ENCODE measurements at regions of chr1 and their contacts with region 1.

Region 1: DNA sequence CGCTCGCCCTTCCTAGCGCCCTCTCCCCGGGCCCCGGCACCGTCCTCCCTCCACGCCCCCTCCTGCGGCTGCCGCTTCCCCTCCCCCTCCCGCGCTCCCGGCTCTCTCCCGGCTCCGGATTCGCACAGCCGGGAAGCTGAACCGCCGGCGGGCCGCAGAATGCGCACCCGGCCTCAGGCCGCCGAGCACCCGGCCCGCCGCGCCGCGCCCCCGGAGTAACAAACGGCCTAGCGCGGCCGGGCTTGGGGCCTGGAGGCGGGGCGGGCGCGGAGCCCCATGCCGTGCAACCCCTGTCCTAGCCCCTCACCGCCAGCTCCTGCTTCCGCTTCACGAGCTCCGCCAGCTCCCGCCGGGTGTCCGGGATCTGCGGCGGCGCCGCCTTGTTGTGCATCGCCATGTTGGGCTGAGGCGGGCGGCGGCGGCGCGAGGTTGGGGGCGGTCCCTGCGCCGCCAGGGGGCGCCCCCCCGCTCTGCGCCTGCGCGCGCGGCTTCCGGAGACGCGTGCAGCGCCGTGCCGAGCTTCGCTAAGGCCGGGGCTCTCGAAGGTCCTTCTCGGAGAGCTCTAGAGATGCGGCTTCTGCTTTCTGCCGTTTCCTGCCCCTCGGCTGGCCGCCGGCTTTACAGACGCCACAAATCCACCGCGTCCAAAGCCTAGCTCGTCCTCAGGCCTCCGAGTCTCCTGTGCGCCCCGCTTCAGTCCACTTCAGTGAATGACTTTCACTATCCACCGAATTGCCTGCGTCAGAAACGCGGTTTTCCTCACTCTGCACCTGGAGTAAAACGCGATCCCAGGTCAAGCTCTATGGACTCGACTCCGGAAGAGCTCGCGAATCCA is at the start of gene MEAF6:
- DNase-seq: peak; percentile 93
- ATAC-seq: peak; percentile 97
- H3K4me3 ChIP-seq: peak within 1 kb of the TSS; percentile 57 to 80 (median 77)
- H3K4me3 Mint-ChIP-seq: peak within 1 kb of the TSS; percentile 99
- H3K27ac ChIP-seq: peak within 1 kb of the TSS; percentile 78 to 87
- H3K27ac Mint-ChIP-seq: peak within 1 kb of the TSS; percentile 99
- H3K4me1 ChIP-seq: peaks cover 14 to 22% of the 10 kb centered on the region in 2 donors
- H3K4me1 Mint-ChIP-seq: peaks cover 39% of the 10 kb centered on the region
- H3K27me3 ChIP-seq: no peaks in the 10 kb centered on the region
- H3K27me3 Mint-ChIP-seq: no peaks in the 10 kb centered on the region
- CTCF ChIP-seq: peak; percentile 84
- total RNA-seq, gene MEAF6: 82.0 and 84.2 TPM in 2 replicates

Region 2: GRCh38 chr1:37474046-37474759 is 40.4 kb before region 1 on chr1 and contains the start of gene ZC3H12A:
- CTCF ChIA-PET with region 1: interaction called, 27 read pairs
- POLR2A ChIA-PET with region 1: interaction called, 9 read pairs
- intact Hi-C with region 1: loop called (anchors 1 kb)
- DNase-seq: peak; percentile 96
- ATAC-seq: peak; percentile 69
- H3K4me3 ChIP-seq: peak within 1 kb of the TSS; percentile 94 to 99 (median 98)
- H3K4me3 Mint-ChIP-seq: peak within 1 kb of the TSS; percentile 100
- H3K27ac ChIP-seq: peak within 1 kb of the TSS; percentile 96 to 97
- H3K27ac Mint-ChIP-seq: peak within 1 kb of the TSS; percentile 98
- H3K4me1 ChIP-seq: peaks cover 23 to 50% of the 10 kb centered on the region in 2 donors
- H3K4me1 Mint-ChIP-seq: peaks cover 51% of the 10 kb centered on the region
- H3K27me3 ChIP-seq: peaks cover 0 to 6% (median 0%) of the 10 kb centered on the region in 4 experiments
- H3K27me3 Mint-ChIP-seq: peaks cover 7% of the 10 kb centered on the region
- CTCF ChIP-seq: no peak
- total RNA-seq, gene ZC3H12A: 67.9 and 73.0 TPM in 2 replicates

Region 3: DNA sequence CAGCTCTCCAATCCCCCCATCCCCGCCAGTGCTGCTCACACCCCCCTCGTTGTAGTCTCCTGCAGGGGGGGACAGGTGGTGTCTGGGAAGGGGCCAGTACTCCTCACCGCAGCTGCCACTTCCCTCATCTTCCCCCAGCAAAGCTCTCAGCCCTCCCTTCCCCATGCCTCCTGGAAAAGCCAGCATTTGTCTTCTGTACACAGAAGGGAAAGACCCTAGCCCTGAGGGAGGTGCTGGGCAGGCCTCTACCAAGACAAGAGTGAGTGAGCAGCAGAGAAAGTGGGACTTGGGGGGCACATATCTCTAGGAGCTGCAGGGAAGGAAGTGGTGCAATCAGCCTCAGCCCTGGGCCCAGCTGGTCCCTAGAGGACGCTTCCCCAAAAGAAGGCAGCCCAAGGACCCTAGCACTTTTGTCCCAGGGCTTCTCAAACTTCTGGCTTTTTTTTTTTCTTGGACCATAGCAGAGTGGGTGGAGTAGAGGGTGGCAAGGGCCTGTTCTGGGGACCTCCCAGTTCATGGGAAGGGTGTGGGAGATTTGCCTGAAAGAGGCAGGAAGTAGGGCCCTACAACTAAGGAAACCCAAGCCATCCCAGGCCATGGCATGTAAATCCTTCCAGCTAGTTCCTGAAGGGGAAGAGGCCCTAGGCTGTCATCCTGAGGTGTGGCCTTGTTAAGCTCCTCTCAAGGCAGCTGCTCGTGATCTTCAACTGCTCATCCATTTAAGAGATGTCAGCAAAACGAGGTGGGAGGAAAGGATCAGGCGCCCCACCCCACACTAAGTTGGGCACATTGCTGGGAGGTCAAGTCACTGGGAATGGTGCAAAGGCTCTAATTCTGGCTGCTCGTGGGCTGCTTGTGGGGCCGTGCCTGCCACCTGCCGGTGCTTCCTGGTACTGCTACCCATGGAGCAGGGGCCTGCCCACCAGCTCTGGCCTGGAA is 27.6 kb before region 1 on chr1:
- CTCF ChIA-PET with region 1: interaction called, 33 read pairs
- POLR2A ChIA-PET with region 1: no interaction called
- intact Hi-C with region 1: no loop called
- DNase-seq: peak; percentile 83
- ATAC-seq: peak; percentile 89
- H3K4me3 ChIP-seq: no peak overlapping the region
- H3K4me3 Mint-ChIP-seq: no peak overlapping the region
- H3K27ac ChIP-seq: peak overlapping the region; percentile 16 to 66
- H3K27ac Mint-ChIP-seq: peak overlapping the region; percentile 86
- H3K4me1 ChIP-seq: peaks cover 11 to 14% of the 10 kb centered on the region in 2 donors
- H3K4me1 Mint-ChIP-seq: peaks cover 24% of the 10 kb centered on the region
- H3K27me3 ChIP-seq: no peaks in the 10 kb centered on the region
- H3K27me3 Mint-ChIP-seq: no peaks in the 10 kb centered on the region
- CTCF ChIP-seq: peak; percentile 97

Region 4: GRCh38 chr1:37553927-37554808 is 39.6 kb after region 1 on chr1 and contains the start of gene SNIP1:
- CTCF ChIA-PET with region 1: interaction called, 13 read pairs
- POLR2A ChIA-PET with region 1: interaction called, 5 read pairs
- intact Hi-C with region 1: loop called (anchors 1 kb)
- DNase-seq: peak; percentile 94
- ATAC-seq: peak; percentile 98
- H3K4me3 ChIP-seq: peak within 1 kb of the TSS; percentile 75 to 99 (median 93)
- H3K4me3 Mint-ChIP-seq: peak within 1 kb of the TSS; percentile 98
- H3K27ac ChIP-seq: peak within 1 kb of the TSS; percentile 82 to 96
- H3K27ac Mint-ChIP-seq: peak within 1 kb of the TSS; percentile 97
- H3K4me1 ChIP-seq: peaks cover 13 to 19% of the 10 kb centered on the region in 2 donors
- H3K4me1 Mint-ChIP-seq: peaks cover 33% of the 10 kb centered on the region
- H3K27me3 ChIP-seq: peaks cover 0 to 3% (median 0%) of the 10 kb centered on the region in 4 experiments
- H3K27me3 Mint-ChIP-seq: peaks cover 5% of the 10 kb centered on the region
- CTCF ChIP-seq: no peak
- total RNA-seq, gene SNIP1: 45.0 and 45.1 TPM in 2 replicates

Region 5: GRCh38 chr1:37682334-37682987 is 167.9 kb after region 1 on chr1:
- CTCF ChIA-PET with region 1: interaction called, 8 read pairs
- POLR2A ChIA-PET with region 1: no interaction called
- intact Hi-C with region 1: loop called (anchors 2 kb)
- DNase-seq: peak; percentile 81
- ATAC-seq: peak; percentile 84
- H3K4me3 ChIP-seq: no peak overlapping the region
- H3K4me3 Mint-ChIP-seq: no peak overlapping the region
- H3K27ac ChIP-seq: peak overlapping the region; percentile 15 to 66
- H3K27ac Mint-ChIP-seq: peak overlapping the region; percentile 84
- H3K4me1 ChIP-seq: peaks cover 3 to 11% of the 10 kb centered on the region in 2 donors
- H3K4me1 Mint-ChIP-seq: peaks cover 7% of the 10 kb centered on the region
- H3K27me3 ChIP-seq: no peaks in the 10 kb centered on the region
- H3K27me3 Mint-ChIP-seq: no peaks in the 10 kb centered on the region
- CTCF ChIP-seq: peak; percentile 94

Region 6: GRCh38 chr1:37850352-37850955 is 335.9 kb after region 1 on chr1:
- CTCF ChIA-PET with region 1: no interaction called
- POLR2A ChIA-PET with region 1: no interaction called
- intact Hi-C with region 1: no loop called
- DNase-seq: no peak
- ATAC-seq: no peak
- H3K4me3 ChIP-seq: no peak overlapping the region
- H3K4me3 Mint-ChIP-seq: no peak overlapping the region
- H3K27ac ChIP-seq: peak overlapping the region in 1 of 2 donors; percentile 77
- H3K27ac Mint-ChIP-seq: no peak overlapping the region
- H3K4me1 ChIP-seq: peaks cover 36 to 45% of the 10 kb centered on the region in 2 donors
- H3K4me1 Mint-ChIP-seq: peaks cover 49% of the 10 kb centered on the region
- H3K27me3 ChIP-seq: no peaks in the 10 kb centered on the region
- H3K27me3 Mint-ChIP-seq: no peaks in the 10 kb centered on the region
- CTCF ChIP-seq: no peak

Measured in B cell (primary cell).